A673 (cell line): ENCODE measurements at regions of chr12 and their contacts with region 1.

Region 1: GRCh38 chr12:30985814-30986452 is 59.4 kb downstream of the TSPAN11 start:
- DNase-seq: peak; percentile 73
- H3K4me3 ChIP-seq: no peak overlapping the region
- H3K27ac ChIP-seq: no peak overlapping the region
- H3K4me1 ChIP-seq: no peaks in the 10 kb centered on the region
- H3K27me3 ChIP-seq: no peaks in the 10 kb centered on the region
- CTCF ChIP-seq: peak; percentile 85

Region 2: GRCh38 chr12:30384976-30385375 is 601.0 kb before region 1 on chr12:
- CTCF ChIA-PET with region 1: no interaction called
- POLR2A ChIA-PET with region 1: no interaction called
- intact Hi-C with region 1: no loop called
- DNase-seq: no peak
- H3K4me3 ChIP-seq: no peak overlapping the region
- H3K27ac ChIP-seq: no peak overlapping the region
- H3K4me1 ChIP-seq: no peaks in the 10 kb centered on the region
- H3K27me3 ChIP-seq: no peaks in the 10 kb centered on the region
- CTCF ChIP-seq: no peak

Region 3: GRCh38 chr12:30695199-30696103 is 290.5 kb before region 1 on chr12 and contains the start of gene IPO8:
- CTCF ChIA-PET with region 1: no interaction called
- POLR2A ChIA-PET with region 1: no interaction called
- intact Hi-C with region 1: no loop called
- DNase-seq: peak; percentile 97
- H3K4me3 ChIP-seq: peak within 1 kb of the TSS; percentile 83
- H3K27ac ChIP-seq: peak within 1 kb of the TSS; percentile 81
- H3K4me1 ChIP-seq: peaks cover 11% of the 10 kb centered on the region
- H3K27me3 ChIP-seq: no peaks in the 10 kb centered on the region
- CTCF ChIP-seq: peak; percentile 57
- total RNA-seq, gene IPO8: 37.9 and 42.7 TPM in 2 replicates

Region 4: DNA sequence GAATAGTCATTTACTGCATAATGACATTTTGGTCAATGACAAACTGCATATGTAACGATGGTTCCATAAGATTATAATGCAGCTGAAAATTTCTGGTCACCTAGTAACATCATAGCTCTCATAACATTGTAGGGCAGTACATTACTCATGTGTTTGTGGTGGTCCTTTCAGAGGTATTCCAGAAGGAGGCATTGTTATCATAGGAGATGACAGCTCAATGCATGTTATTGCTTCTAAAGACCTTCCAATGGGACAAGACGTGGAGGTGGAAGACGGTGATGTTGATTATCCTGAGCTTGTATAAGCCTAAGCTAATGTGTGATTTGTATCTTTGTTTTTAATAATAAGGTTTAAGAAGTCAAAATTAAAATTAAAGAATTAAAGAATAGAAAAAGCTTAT is 103.2 kb before region 1 on chr12:
- CTCF ChIA-PET with region 1: interaction called, 23 read pairs
- POLR2A ChIA-PET with region 1: no interaction called
- intact Hi-C with region 1: loop called (anchors 1 kb)
- DNase-seq: peak; percentile 32
- H3K4me3 ChIP-seq: no peak overlapping the region
- H3K27ac ChIP-seq: no peak overlapping the region
- H3K4me1 ChIP-seq: no peaks in the 10 kb centered on the region
- H3K27me3 ChIP-seq: no peaks in the 10 kb centered on the region
- CTCF ChIP-seq: peak; percentile 53